ENCODE measurements at regions of chr10 and their contacts with region 1.

Region 1: DNA sequence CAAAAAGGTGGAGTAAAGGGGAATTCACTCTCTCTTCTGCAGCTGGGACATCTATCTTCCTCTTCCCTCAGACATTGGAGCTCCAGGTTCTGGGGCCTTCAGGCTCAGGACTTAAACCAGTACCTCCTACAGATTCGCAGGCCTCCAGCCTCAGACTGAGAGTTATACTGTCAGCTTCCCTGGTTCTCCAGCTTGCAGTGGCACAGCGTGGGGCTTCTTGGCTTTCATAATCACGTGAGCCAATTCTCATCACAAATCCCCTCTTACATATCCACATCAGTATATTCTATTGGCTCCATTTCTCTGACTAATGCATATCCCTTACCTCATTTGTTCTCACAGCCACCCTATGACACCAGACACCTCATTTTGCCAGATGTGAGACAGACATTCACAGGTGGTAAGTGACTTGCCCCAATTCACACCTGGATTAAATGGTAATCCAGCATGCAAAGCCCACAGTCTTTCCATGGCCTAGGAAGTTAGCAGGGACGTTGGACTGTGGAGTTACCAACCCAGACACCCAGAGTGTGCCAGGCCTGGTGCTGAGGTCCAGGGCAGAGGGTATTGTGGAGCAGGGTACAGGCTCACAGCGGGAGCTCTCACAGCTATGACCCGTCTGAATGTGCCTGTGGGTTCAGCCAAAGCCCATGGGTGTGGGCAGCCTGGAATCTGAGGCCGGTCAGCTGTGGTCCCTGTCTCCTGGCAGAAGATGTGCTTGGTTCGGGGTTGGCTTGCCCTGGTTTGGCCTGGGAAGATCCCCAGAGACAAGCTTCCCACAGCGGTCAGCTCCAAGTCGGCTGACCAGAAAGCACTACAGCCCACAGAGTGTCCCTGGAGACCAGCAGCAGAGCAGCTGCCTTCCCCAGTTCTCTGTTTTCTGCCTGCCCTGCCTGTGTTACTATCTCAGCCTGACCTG is 18.4 kb upstream of the ZCCHC24 start:
- DNase-seq: peak; percentile 37 to 78 (median 63)
- ATAC-seq: peak; percentile 12 to 61 (median 30)
- H3K4me3 ChIP-seq: no peak overlapping the region
- H3K27ac ChIP-seq: no peak overlapping the region
- H3K4me1 ChIP-seq: peaks cover 0 to 35% (median 15%) of the 10 kb centered on the region in 12 donors
- H3K27me3 ChIP-seq: no peaks in the 10 kb centered on the region
- CTCF ChIP-seq: no peak
- POLR2A ChIP-seq: no peak

Region 2: GRCh38 chr10:79374312-79375191 is 89.3 kb before region 1 on chr10:
- intact Hi-C with region 1: loop called (anchors 1 to 5 kb)
- DNase-seq: peak; percentile 78 to 89 (median 83)
- ATAC-seq: peak; percentile 27 to 68 (median 58)
- H3K4me3 ChIP-seq: no peak overlapping the region
- H3K27ac ChIP-seq: no peak overlapping the region
- H3K4me1 ChIP-seq: peaks cover 0 to 17% (median 11%) of the 10 kb centered on the region in 12 donors
- H3K27me3 ChIP-seq: no peaks in the 10 kb centered on the region
- CTCF ChIP-seq: peak in 11 of 12 donors; percentile 90 to 99 (median 98)
- POLR2A ChIP-seq: peak in 1 of 2 donors; percentile 21

Region 3: GRCh38 chr10:79400146-79401004 is 63.5 kb before region 1 on chr10:
- intact Hi-C with region 1: loop called in 1 of 10 experiments (anchors 2 kb)
- DNase-seq: peak in 2 of 5 donors; percentile 52 to 77
- ATAC-seq: no peak
- H3K4me3 ChIP-seq: no peak overlapping the region
- H3K27ac ChIP-seq: peak overlapping the region in 10 of 12 donors; percentile 83 to 98 (median 91)
- H3K4me1 ChIP-seq: peaks cover 0 to 95% (median 76%) of the 10 kb centered on the region in 12 donors
- H3K27me3 ChIP-seq: no peaks in the 10 kb centered on the region
- CTCF ChIP-seq: peak; percentile 46 to 74 (median 62)
- POLR2A ChIP-seq: no peak

Region 4: DNA sequence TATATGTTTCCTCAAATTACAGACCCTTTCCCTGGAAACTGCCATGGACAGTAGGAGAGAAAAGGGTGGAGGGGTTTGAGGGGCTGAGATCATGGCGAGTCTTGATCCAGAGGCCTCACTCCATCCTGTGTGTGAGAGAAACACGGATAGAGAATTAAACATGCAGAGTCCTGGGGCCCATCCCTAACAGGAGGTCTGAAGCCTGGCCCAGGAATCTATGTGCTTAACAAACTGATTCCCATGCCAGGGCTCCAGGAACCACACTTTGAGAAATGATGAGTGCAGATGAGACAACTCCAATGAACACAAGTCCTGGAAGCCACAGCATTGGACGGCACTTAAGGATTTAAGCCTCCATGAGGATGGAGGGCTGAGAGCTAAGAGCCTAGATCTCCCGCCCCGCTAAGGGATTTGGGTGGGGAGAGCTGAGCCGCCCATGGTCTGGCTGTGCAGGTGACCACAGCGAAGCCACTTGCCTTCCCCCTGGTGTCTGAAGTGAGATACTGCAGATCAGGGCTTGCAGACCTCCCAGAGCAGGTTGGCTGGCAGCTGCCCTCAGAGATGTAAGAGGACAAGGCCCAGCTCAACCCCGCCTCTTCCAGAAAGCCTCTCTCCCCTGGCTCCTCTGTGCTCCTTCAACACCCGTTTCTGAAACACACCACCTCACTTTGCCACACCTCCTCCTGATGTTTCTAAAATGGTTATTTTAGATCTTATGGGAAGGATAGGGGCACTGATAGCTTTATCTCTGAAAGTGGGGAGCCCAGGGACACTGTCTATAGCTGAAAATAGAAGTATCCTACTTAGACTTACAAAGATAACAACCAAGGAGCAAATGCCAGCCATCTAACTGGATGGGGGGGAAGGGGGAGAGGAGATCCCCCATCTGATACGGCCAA is 23.7 kb after region 1 on chr10:
- intact Hi-C with region 1: loop called in 1 of 10 experiments (anchors 1 kb)
- DNase-seq: peak in 4 of 5 donors; percentile 46 to 68 (median 58)
- ATAC-seq: peak; percentile 31 to 67 (median 61)
- H3K4me3 ChIP-seq: no peak overlapping the region
- H3K27ac ChIP-seq: peak overlapping the region in 11 of 12 donors; percentile 24 to 76 (median 50)
- H3K4me1 ChIP-seq: peaks cover 0 to 49% (median 15%) of the 10 kb centered on the region in 12 donors
- H3K27me3 ChIP-seq: no peaks in the 10 kb centered on the region
- CTCF ChIP-seq: peak; percentile 63 to 81 (median 71)
- POLR2A ChIP-seq: no peak